Aorta (tissue), 5 donors: ENCODE measurements at regions of chr20 and their contacts with region 1.

Region 1: DNA sequence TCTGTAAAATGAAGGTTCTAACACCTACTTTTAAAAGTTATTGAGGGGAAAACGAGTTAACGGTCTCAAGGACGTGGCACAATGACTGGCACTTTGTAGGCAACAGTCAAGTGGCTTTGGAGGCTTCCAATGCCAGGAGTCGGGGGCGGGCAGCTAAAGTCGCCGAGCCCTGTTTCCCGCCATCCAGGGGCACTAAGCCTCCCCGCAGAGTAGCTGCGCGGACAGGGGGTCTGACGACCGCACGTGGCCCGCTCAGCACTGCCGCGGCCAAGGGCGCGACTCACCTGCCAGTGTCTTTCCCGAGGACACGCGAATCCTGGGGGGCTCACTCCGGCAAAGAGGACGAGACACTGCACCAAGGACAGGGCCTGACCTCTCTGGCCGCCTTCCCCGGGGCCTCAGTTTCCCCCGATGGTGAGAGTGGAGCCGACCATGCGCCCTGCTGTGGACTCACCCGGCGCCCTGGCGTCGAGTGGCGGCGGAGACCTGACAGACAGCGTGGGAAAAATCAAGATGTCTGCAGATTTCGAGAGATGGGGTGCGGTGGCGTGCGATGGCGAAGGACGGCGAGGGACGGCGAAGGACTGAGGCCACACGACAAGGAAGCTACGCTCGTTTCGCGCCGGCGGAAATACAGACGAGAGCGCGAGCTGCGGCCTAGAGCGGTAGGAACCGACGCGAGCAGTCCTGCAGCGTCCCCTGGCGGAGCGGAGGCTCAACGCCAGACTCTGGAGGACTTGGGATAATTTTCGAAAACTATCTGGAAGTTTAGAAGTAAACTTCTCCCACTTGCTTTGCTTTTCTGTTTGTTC is at the start of gene SNHG17:
- DNase-seq: peak; percentile 94 to 96
- ATAC-seq: peak; percentile 95
- H3K4me3 ChIP-seq: peak within 1 kb of the TSS; percentile 44 to 75
- H3K27ac ChIP-seq: peak within 1 kb of the TSS; percentile 49 to 54
- H3K4me1 ChIP-seq: no peaks in the 10 kb centered on the region
- H3K27me3 ChIP-seq: no peaks in the 10 kb centered on the region
- total RNA-seq, gene SNHG17: 30.4 to 46.2 TPM

Region 2: GRCh38 chr20:38033310-38034107 is 401.4 kb before region 1 on chr20 and contains the starts of genes RPRD1B and TTI1:
- intact Hi-C with region 1: loop called in 1 of 2 experiments (anchors 10 kb)
- DNase-seq: peak; percentile 95 to 97
- ATAC-seq: peak; percentile 97
- H3K4me3 ChIP-seq: peak within 1 kb of the TSS; percentile 60 to 69
- H3K27ac ChIP-seq: peak within 1 kb of the TSS; percentile 36 to 74
- H3K4me1 ChIP-seq: peaks cover 2 to 10% of the 10 kb centered on the region in 2 donors
- H3K27me3 ChIP-seq: no peaks in the 10 kb centered on the region
- total RNA-seq, gene RPRD1B: 33.9 to 43.5 TPM
- total RNA-seq, gene TTI1: 11.8 to 15.1 TPM

Region 3: GRCh38 chr20:38446441-38447209 is 11.7 kb after region 1 on chr20:
- intact Hi-C with region 1: loop called in 1 of 2 experiments (anchors 1 kb)
- DNase-seq: peak; percentile 95 to 98
- ATAC-seq: peak; percentile 94
- H3K4me3 ChIP-seq: peak overlapping the region; percentile 46 to 68
- H3K27ac ChIP-seq: peak overlapping the region in 1 of 2 donors; percentile 74
- H3K4me1 ChIP-seq: no peaks in the 10 kb centered on the region
- H3K27me3 ChIP-seq: no peaks in the 10 kb centered on the region